ENCODE measurements at regions of chr1 and their contacts with region 1.

Region 1: GRCh38 chr1:247371801-247372259 is 40.2 kb upstream of the ZNF496 start:
- DNase-seq: no peak
- H3K4me3 ChIP-seq: no peak overlapping the region
- H3K27ac ChIP-seq: no peak overlapping the region
- H3K4me1 ChIP-seq: no peaks in the 10 kb centered on the region
- H3K27me3 ChIP-seq: peaks cover 18% of the 10 kb centered on the region; the same call in 1 of the 2 replicates
- CTCF ChIP-seq: no peak

Region 2: GRCh38 chr1:247487057-247487456 is 115.2 kb after region 1 on chr1:
- CTCF ChIA-PET with region 1: no interaction called
- POLR2A ChIA-PET with region 1: no interaction called
- intact Hi-C with region 1: loop called (anchors 1 kb)
- DNase-seq: peak in 1 of 2 experiments; percentile 7
- H3K4me3 ChIP-seq: no peak overlapping the region
- H3K27ac ChIP-seq: no peak overlapping the region
- H3K4me1 ChIP-seq: no peaks in the 10 kb centered on the region
- H3K27me3 ChIP-seq: peaks cover 11% of the 10 kb centered on the region; the same call in 1 of the 2 replicates
- CTCF ChIP-seq: peak; percentile 52

Region 3: GRCh38 chr1:247576495-247576894 is 204.7 kb after region 1 on chr1:
- CTCF ChIA-PET with region 1: no interaction called
- POLR2A ChIA-PET with region 1: no interaction called
- intact Hi-C with region 1: loop called (anchors 1 kb)
- DNase-seq: no peak
- H3K4me3 ChIP-seq: no peak overlapping the region
- H3K27ac ChIP-seq: no peak overlapping the region
- H3K4me1 ChIP-seq: no peaks in the 10 kb centered on the region
- H3K27me3 ChIP-seq: no peaks in the 10 kb centered on the region
- CTCF ChIP-seq: peak; percentile 50